Activated CD4-positive, alpha-beta T cell treated with anti-CD3 and anti-CD28 coated beads for 36 hours (primary cell): ENCODE measurements at regions of chr9 and their contacts with region 1.

Region 1: DNA sequence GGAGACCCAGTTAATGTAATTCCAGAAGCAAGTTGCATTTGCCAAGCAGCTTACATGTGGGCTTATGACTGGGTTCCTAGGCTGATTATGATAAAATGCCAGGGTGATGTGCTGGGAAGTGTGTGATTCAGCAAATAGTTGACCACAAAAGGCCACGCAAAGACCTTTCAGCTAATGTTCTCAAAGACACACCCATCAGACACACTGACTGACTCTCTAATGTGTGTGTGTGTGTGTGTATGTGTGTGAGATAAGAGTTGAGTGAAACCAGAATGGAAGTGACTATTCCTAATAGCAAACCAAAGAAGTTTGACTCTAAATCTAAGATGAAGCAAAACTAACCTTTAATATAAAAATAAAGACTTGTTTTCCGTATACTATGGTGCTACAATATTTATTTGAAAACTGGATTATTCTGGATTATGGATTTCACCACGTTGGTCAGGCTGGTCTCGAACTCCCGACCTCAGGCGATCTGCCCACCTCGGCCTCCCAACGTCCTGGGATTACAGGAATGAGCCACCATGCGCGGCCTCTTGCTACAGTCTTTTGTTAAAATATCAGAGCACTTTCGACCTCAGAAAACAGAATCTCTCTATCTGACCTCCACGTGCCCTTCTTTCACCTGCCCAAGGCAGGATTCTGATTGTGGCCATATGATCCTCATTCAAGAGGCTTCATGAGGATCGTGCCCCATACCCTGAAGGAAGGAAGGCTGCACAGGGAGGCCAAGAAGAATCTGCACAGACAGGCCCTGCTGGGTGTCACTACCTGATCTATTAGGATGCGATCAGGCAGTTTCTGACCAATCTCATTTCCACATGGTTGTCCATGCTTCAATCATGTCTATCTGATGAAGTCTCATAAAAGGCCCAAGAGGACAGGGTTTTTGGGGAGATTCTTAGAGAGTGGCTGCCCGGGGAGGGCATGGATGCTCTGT is 75.6 kb downstream of the USP20 start:
- DNase-seq: peak; percentile 48
- ATAC-seq: peak; percentile 76
- H3K4me3 Mint-ChIP-seq: peak overlapping the region; percentile 14
- H3K27ac Mint-ChIP-seq: peak overlapping the region; percentile 63
- H3K4me1 Mint-ChIP-seq: peaks cover 22% of the 10 kb centered on the region
- H3K27me3 Mint-ChIP-seq: no peaks in the 10 kb centered on the region

Region 2: DNA sequence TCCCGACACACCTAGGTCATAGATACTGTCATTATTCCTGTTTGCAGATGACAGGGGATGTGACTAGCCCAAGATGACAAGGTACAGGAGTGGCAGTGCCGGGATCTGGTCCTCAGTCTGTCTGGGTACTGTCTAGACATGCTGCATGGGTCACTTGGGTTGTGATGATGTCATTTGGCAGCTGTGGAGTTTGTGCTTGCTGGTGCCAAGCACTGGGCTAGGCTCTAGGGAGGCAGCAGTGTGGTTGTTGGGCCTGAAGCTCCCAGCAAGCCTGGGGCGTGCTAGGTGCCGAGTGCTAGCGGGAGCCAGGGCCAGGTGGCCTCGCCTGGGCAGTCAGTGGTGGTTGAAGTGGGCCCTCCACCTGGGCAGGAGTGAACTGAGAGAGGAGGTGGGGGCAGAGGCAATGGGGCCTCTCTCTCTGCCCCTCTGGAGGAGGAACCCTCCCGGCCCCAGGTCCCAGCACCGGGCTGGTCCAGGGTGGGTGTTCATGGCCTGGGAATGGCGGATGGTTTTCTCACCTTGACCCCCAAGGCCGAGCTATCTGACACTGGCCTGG is 260.1 kb before region 1 on chr9:
- CTCF ChIA-PET with region 1: no interaction called
- POLR2A ChIA-PET with region 1: no interaction called
- intact Hi-C with region 1: no loop called
- DNase-seq: no peak
- ATAC-seq: no peak
- H3K4me3 Mint-ChIP-seq: no peak overlapping the region
- H3K27ac Mint-ChIP-seq: no peak overlapping the region
- H3K4me1 Mint-ChIP-seq: no peaks in the 10 kb centered on the region
- H3K27me3 Mint-ChIP-seq: no peaks in the 10 kb centered on the region

Region 3: DNA sequence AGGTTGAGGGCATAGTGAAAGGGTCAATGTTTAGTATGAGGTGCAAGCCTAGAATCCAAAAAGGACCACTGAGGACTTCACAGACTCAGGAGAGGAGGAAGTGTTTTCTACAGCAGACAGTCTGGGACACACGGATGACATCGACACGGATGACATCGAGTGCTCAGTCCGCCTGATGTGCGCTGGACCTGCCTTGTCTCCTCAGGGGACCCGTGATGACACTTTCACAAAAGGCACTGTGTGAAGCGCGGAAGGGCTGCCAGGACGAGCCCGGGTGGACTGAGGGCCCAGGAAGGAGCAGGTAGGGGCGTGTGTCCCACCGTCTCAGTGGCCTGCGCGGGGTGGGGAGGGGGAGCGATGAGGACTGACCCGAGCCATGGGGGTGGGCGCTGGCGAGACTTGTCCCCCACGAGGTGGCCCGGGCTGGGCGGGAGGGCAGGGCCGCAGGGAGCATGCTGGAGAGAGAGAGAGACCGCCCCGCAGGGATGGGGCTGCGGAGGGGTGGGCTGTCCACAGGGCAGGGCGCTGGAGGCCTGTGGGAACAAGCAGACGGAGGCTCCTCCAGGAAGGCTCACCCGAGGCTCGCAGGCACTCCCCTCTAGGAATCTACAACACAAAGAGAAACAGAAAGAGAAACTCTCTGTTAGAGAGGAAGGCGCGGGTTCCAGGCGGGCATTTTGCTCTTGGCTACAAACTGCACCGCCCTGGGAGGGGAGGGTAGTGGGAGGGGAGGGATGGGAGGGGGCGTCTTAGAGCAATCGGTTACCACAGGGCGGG is 20.8 kb before region 1 on chr9:
- CTCF ChIA-PET with region 1: no interaction called
- POLR2A ChIA-PET with region 1: no interaction called
- intact Hi-C with region 1: loop called in 1 of 2 experiments (anchors 2 kb)
- DNase-seq: peak; percentile 93
- ATAC-seq: peak; percentile 6
- H3K4me3 Mint-ChIP-seq: peak overlapping the region; percentile 97
- H3K27ac Mint-ChIP-seq: peak overlapping the region; percentile 99
- H3K4me1 Mint-ChIP-seq: peaks cover 78% of the 10 kb centered on the region
- H3K27me3 Mint-ChIP-seq: no peaks in the 10 kb centered on the region

Region 4: DNA sequence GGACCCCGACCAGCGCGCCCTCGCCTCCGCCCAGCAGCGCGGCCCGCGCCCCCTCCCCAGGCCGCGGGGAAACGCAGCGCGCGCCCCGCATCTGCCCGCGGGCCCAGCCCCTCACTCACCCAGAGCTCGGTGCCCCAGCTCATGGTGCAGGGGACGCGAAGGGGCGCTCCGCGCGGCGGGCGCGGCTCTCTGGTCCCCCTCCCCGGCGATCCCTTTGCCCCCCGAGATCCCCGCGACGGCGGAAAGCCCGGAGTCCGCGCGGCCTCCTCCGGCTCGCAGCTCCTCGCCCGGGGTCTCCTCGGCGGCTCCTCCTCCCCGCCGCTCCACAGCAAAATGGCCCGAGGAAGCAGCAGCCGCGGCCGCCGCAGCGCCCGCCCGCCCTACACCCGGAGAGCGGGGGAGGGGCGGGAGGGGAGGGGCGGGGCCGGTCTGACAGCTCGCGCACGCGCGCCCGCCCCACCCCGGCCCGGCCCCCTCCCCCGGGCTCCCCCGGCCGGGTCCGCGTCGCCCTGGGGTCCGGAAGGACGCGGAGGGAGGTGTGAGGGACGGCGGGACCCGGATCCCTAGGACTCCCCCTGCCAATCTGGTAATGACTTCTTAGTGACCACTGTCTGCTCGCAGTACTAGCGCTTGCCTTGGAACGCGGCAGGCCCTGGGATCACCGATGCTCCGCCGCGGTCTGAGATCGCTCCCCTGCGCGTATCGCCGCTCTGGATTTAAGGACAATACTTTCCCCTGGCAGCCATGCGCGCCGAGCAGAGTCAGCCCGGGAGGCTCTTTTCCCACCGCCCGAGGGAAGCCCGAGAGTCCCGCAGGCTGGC is 132.1 kb after region 1 on chr9 and contains the start of gene FNBP1:
- CTCF ChIA-PET with region 1: no interaction called
- POLR2A ChIA-PET with region 1: no interaction called
- intact Hi-C with region 1: no loop called
- DNase-seq: peak; percentile 91
- ATAC-seq: peak; percentile 63
- H3K4me3 Mint-ChIP-seq: peak within 1 kb of the TSS; percentile 100
- H3K27ac Mint-ChIP-seq: peak within 1 kb of the TSS; percentile 100
- H3K4me1 Mint-ChIP-seq: peaks cover 33% of the 10 kb centered on the region
- H3K27me3 Mint-ChIP-seq: no peaks in the 10 kb centered on the region
- total RNA-seq, gene FNBP1: 254 to 354 TPM